GM12878 (cell line): ENCODE measurements at regions of chr6 and their contacts with region 1.

Region 1: DNA sequence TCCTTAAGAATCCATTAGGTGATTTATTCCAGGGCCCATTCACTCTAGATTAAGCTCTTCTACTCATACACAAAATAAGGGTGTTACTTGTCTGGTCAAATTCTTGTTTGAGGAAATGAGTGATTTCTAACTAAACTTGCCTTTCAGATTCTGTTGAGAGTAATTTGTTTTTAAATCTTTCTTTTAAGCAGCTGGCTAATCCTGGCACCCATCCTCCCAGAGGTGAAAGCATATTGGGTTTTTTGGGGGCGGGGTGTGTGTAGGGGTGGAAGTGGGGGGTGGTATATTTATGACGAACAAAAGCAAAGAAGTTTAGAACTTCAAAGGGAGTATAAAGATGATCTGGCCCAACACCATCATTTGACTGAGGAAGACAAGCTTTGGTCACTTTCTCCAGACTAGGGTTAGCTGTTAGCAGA is 94.7 kb downstream of the RTN4IP1 start:
- DNase-seq: no peak
- ATAC-seq: peak; percentile 55
- H3K4me3 ChIP-seq: no peak overlapping the region
- H3K27ac ChIP-seq: no peak overlapping the region
- H3K4me1 ChIP-seq: peaks cover 16% of the 10 kb centered on the region
- H3K27me3 ChIP-seq: no peaks in the 10 kb centered on the region
- CTCF ChIP-seq: no peak
- EP300 ChIP-seq: no peak
- POLR2A ChIP-seq: no peak
- RAD21 ChIP-seq: no peak

Region 2: DNA sequence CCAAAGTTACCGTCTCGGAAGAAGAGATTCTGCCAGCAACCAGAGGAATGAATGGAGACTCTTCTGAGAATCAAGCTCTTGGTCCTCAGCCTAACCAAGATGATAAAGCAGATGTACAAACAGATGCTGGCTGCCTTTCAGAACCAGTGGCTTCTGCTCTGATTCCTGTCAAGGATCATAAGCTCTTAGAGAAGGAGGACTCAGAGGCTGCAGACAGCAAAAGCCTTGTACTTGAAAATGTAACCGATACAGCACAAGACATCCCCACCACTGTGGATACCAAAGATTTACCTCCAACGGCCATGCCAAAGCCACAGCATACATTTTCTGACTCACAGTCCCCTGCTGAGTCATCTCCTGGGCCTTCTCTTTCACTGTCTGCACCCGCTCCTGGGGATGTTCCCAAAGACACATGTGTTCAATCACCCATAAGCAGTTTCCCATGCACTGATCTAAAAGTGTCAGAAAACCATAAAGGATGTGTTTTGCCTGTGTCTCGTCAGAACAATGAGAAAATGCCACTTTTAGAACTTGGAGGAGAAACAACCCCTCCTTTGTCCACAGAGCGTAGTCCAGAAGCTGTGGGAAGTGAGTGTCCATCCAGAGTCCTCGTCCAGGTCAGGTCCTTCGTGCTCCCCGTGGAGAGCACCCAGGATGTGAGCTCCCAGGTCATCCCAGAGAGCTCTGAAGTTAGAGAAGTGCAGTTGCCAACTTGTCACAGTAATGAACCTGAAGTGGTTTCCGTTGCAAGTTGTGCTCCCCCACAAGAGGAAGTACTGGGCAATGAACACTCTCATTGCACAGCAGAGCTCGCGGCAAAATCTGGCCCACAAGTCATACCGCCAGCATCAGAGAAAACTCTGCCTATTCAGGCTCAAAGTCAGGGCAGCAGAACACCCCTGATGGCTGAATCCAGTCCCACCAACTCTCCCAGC is 14.8 kb before region 1 on chr6:
- CTCF ChIA-PET with region 1: interaction called, 6 read pairs
- POLR2A ChIA-PET with region 1: interaction called, 7 read pairs
- RAD21 ChIA-PET with region 1: interaction called, 10 read pairs
- SMC1A ChIA-PET with region 1: interaction called, 17 read pairs
- in situ Hi-C with region 1: no loop called
- intact Hi-C with region 1: no loop called
- DNase-seq: peak; percentile 89
- ATAC-seq: peak; percentile 66
- H3K4me3 ChIP-seq: peak overlapping the region; percentile 73
- H3K27ac ChIP-seq: peak overlapping the region; percentile 93
- H3K4me1 ChIP-seq: no peaks in the 10 kb centered on the region
- H3K27me3 ChIP-seq: no peaks in the 10 kb centered on the region
- CTCF ChIP-seq: no peak
- EP300 ChIP-seq: peak; percentile 61 to 72
- POLR2A ChIP-seq: peak; percentile 78
- RAD21 ChIP-seq: no peak

Region 3: GRCh38 chr6:106608062-106608668 is 73.6 kb after region 1 on chr6:
- CTCF ChIA-PET with region 1: no interaction called
- POLR2A ChIA-PET with region 1: no interaction called
- RAD21 ChIA-PET with region 1: no interaction called
- SMC1A ChIA-PET with region 1: no interaction called
- in situ Hi-C with region 1: no loop called
- intact Hi-C with region 1: no loop called
- DNase-seq: peak; percentile 40
- ATAC-seq: peak; percentile 95
- H3K4me3 ChIP-seq: no peak overlapping the region
- H3K27ac ChIP-seq: no peak overlapping the region
- H3K4me1 ChIP-seq: no peaks in the 10 kb centered on the region; the same call in 1 of the 2 replicates
- H3K27me3 ChIP-seq: no peaks in the 10 kb centered on the region
- CTCF ChIP-seq: peak; percentile 68 to 72 (median 68)
- EP300 ChIP-seq: no peak
- POLR2A ChIP-seq: no peak
- RAD21 ChIP-seq: peak; percentile 76